ENCODE measurements at regions of chr1 and their contacts with region 1.

Region 1: GRCh38 chr1:66271216-66271903 is 262.6 kb upstream of the SGIP1 start:
- DNase-seq: peak; percentile 72 to 92 (median 89)
- ATAC-seq: peak; percentile 90 to 96 (median 92)
- H3K4me3 ChIP-seq: peak overlapping the region in 9 of 12 donors; percentile 3 to 47 (median 17)
- H3K27ac ChIP-seq: peak overlapping the region; percentile 67 to 94 (median 84)
- H3K4me1 ChIP-seq: peaks cover 9 to 96% (median 51%) of the 10 kb centered on the region in 12 donors
- H3K27me3 ChIP-seq: no peaks in the 10 kb centered on the region
- CTCF ChIP-seq: no peak
- POLR2A ChIP-seq: peak in 1 of 2 donors; percentile 38

Region 2: GRCh38 chr1:66253330-66253921 is 17.9 kb before region 1 on chr1:
- intact Hi-C with region 1: no loop called
- DNase-seq: peak in 1 of 5 donors; percentile 23
- ATAC-seq: peak; percentile 88 to 94 (median 92)
- H3K4me3 ChIP-seq: no peak overlapping the region
- H3K27ac ChIP-seq: no peak overlapping the region
- H3K4me1 ChIP-seq: peaks cover 0 to 25% (median 0%) of the 10 kb centered on the region in 12 donors
- H3K27me3 ChIP-seq: no peaks in the 10 kb centered on the region
- CTCF ChIP-seq: peak; percentile 72 to 93 (median 87)
- POLR2A ChIP-seq: no peak

Region 3: DNA sequence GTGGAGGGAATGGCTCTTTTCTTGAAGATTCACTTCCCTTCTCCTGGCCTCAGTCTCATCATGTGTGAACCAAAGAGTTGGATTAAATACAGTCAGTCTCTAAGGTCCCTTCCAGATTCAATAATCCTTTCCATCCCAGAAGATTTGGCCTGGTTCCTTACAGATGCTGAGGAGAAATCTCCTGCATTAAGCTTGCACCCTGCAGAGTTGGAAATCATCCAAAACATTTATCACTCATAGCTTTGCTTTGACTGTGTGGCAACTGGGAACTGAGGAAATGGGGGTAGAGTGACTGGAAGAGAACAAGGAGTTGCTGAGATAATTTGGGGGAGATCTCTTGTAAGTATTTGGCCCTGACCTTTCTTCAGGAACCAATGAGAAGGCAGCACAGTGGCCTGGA is 42.1 kb after region 1 on chr1:
- intact Hi-C with region 1: loop called in 1 of 10 experiments (anchors 5 kb)
- DNase-seq: no peak
- ATAC-seq: no peak
- H3K4me3 ChIP-seq: no peak overlapping the region
- H3K27ac ChIP-seq: no peak overlapping the region
- H3K4me1 ChIP-seq: peaks cover 0 to 20% (median 5%) of the 10 kb centered on the region in 12 donors
- H3K27me3 ChIP-seq: no peaks in the 10 kb centered on the region
- CTCF ChIP-seq: no peak
- POLR2A ChIP-seq: no peak

Region 4: DNA sequence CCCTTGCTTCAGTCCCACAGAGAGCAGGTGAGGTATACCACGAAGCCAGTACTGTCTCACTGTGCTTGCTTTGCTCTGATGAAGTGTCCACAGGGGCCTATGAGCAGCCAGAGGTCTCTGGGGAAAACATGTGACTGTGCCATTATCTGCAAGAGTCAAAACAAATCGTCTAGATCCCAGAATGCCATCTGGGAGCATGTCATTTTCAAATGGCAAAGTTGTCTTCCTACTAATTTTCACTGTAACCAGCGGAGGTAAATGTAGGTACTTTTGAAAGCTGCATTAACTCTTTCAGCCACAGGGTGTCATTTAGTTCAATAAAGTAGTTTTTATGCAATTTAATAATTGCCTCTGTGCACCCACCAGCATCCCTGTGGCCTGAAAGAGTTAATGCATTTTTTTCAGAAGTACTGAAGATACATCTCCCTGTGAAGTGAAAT is 88.9 kb after region 1 on chr1:
- intact Hi-C with region 1: no loop called
- DNase-seq: no peak
- ATAC-seq: peak; percentile 28 to 68 (median 42)
- H3K4me3 ChIP-seq: no peak overlapping the region
- H3K27ac ChIP-seq: peak overlapping the region in 2 of 12 donors; percentile 6 to 27
- H3K4me1 ChIP-seq: peaks cover 0 to 44% (median 15%) of the 10 kb centered on the region in 12 donors
- H3K27me3 ChIP-seq: no peaks in the 10 kb centered on the region
- CTCF ChIP-seq: peak in 2 of 12 donors; percentile 15 to 30
- POLR2A ChIP-seq: no peak

Measured in heart left ventricle (tissue), 16 donors.